GM12878 (cell line): ENCODE measurements at regions of chr10 and their contacts with region 1.

Region 1: DNA sequence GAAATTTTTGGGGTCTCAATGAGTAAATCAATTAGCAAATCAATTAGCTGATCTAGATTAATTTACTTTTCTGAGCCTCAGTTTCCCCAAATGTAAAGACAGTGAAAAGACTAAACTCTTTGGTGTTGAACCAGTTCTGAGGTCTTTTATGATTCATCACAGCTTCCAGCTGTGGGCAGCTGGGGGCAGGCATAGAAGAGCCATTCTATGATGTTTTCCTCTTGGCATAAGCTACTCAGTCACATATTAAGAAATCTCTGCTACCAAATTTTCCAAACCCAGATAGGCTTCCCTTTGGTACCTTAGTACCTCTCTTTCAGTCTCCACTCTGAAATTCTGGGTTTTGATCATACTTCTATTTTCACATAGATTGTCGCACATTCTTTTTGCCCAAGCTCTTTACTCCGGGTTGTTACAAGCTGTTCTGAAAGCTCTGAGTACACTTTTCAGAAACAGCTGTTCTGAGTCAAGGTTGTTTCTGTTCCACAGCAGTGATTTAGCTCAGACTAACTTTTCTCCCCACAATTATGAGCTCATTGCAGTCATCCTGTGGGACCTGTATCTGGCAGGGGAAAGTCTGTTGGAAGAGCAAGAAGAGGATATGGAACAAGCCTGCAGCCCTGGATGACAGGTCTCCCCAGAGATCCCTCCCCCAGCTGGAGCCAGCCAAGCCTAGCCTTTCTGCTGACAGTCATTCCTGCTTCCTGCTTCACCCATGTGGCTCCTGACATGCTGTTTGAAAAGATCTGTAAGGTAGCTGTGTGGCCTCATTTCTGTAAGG is 599.6 kb upstream of the GHITM start:
- DNase-seq: peak; percentile 74
- ATAC-seq: peak; percentile 75
- H3K4me3 ChIP-seq: no peak overlapping the region
- H3K27ac ChIP-seq: peak overlapping the region; percentile 70
- H3K4me1 ChIP-seq: peaks cover 31% of the 10 kb centered on the region
- H3K27me3 ChIP-seq: no peaks in the 10 kb centered on the region
- CTCF ChIP-seq: no peak
- EP300 ChIP-seq: no peak
- POLR2A ChIP-seq: no peak
- RAD21 ChIP-seq: peak; percentile 15; the same call in 1 of the 2 replicates

Region 2: DNA sequence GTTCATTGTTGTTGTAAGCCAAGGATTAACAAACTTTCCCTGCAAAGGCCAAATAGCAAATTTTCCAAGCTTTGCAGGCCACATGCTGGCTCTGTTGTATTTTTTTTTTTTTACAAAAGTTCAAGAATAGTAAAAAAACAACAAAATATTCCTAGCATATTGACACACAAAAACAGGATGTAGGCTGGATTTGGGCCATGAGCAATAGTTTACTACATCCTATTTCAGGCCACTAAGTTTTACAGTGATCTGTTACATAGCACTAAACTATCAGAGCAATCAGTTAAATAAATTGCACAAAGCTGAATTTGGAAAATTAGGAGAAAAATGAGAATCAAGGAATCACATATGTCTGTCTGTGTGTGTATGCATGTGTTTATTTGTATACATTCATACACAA is 107.8 kb after region 1 on chr10:
- CTCF ChIA-PET with region 1: no interaction called
- POLR2A ChIA-PET with region 1: no interaction called
- RAD21 ChIA-PET with region 1: no interaction called
- SMC1A ChIA-PET with region 1: no interaction called
- in situ Hi-C with region 1: no loop called
- intact Hi-C with region 1: no loop called
- DNase-seq: no peak
- ATAC-seq: no peak
- H3K4me3 ChIP-seq: no peak overlapping the region
- H3K27ac ChIP-seq: no peak overlapping the region
- H3K4me1 ChIP-seq: no peaks in the 10 kb centered on the region
- H3K27me3 ChIP-seq: no peaks in the 10 kb centered on the region
- CTCF ChIP-seq: no peak
- EP300 ChIP-seq: no peak
- POLR2A ChIP-seq: no peak
- RAD21 ChIP-seq: no peak

Region 3: DNA sequence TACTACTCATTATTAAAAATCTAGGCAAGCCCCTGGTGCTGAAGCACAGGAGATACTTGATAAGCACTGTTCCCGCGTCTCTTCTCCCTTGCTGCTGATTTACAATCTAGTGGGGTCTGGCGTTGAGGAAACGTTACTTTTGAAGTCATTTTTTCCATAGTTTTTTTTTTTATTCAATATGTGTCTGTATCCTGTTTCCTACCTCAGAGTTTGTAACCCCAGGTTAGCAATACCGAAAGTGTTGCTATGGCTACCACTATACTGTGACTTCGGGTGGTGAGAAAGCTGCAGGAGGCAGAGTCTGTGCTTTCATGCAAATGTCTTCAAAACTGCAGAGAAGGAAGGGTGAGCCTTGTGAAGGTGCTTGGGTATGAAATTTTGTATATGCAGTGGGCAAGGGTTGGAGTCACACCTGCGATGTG is 140.8 kb after region 1 on chr10:
- CTCF ChIA-PET with region 1: no interaction called
- POLR2A ChIA-PET with region 1: no interaction called
- RAD21 ChIA-PET with region 1: no interaction called
- SMC1A ChIA-PET with region 1: interaction called, 3 read pairs
- in situ Hi-C with region 1: no loop called
- intact Hi-C with region 1: loop called (anchors 5 kb)
- DNase-seq: peak; percentile 95
- ATAC-seq: peak; percentile 97
- H3K4me3 ChIP-seq: no peak overlapping the region
- H3K27ac ChIP-seq: peak overlapping the region; percentile 61
- H3K4me1 ChIP-seq: peaks cover 31% of the 10 kb centered on the region
- H3K27me3 ChIP-seq: no peaks in the 10 kb centered on the region
- CTCF ChIP-seq: no peak
- EP300 ChIP-seq: peak; percentile 89 to 96
- POLR2A ChIP-seq: no peak
- RAD21 ChIP-seq: peak; percentile 20; the same call in 1 of the 2 replicates